Activated CD4-positive, alpha-beta T cell treated with anti-CD3 and anti-CD28 coated beads, Interleukin-2, amount 10 ng/mL, durations not matched to agents 7 days and 5 days (primary cell): ENCODE measurements at regions of chr1 and their contacts with region 1.

Region 1: DNA sequence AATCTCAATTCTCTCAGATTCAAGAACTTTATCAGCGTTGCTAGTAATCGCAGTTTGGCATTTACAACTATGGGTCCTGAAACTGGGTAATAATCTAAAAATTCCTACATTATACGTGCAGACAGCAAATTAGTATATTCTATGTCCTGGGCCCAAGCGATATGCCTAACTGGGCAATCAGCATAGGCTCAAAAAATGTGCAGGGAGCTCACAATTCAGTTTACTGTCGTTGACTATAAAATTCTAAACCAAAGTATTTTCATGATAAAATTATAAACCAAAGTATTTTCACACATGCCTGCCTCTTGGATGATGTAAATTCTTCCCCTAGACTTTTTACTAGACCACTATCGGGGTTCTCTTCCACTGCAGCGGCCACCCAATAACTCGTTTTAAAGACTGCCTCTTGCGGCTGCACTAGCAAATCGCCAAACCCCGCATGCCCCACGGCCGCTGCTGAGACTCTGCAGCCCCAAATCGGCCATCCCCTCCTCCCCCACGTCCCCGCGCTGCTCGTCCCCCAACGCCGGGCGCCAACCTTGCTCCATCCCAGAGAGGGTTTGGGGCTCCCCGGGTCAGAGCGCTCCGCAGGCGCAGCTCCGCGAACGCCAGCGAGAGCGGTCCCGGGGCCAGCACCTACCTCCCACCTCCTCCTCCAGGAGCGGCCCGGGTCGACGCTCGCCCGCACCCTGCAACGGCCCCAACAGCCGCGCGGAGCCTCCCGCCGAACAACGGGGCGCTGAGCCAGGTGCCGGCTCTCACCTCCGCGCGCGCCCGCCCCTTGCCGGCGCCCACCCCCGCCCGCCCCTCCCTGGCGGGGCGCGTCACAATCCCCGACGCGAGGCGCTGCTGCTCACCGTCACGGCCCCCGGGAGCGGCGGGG is 506 bp downstream of the SSX2IP start:
- DNase-seq: no peak
- H3K4me3 Mint-ChIP-seq: peak overlapping the region; percentile 86
- H3K27ac Mint-ChIP-seq: peak overlapping the region; percentile 88
- H3K4me1 Mint-ChIP-seq: peaks cover 62% of the 10 kb centered on the region
- H3K27me3 Mint-ChIP-seq: no peaks in the 10 kb centered on the region

Region 2: GRCh38 chr1:84675105-84675504 is 14.7 kb before region 1 on chr1:
- CTCF ChIA-PET with region 1: interaction called, 10 read pairs
- POLR2A ChIA-PET with region 1: no interaction called
- DNase-seq: no peak
- H3K4me3 Mint-ChIP-seq: no peak overlapping the region
- H3K27ac Mint-ChIP-seq: no peak overlapping the region
- H3K4me1 Mint-ChIP-seq: peaks cover 18% of the 10 kb centered on the region
- H3K27me3 Mint-ChIP-seq: no peaks in the 10 kb centered on the region